Activated T-helper 1 cell treated with anti-CD3 and anti-CD28 coated beads, Interleukin-12 subunit alpha, Interleukin-12 subunit beta, Interleukin-2, Interleukin-4 antibody, amounts not matched to agents 30 ng/mL and 10 ng/mL and 1 ng/mL, durations not matched to agents 14 hours and 24 hours and 36 hours (primary cell): ENCODE measurements at regions of chr9 and their contacts with region 1.

Region 1: DNA sequence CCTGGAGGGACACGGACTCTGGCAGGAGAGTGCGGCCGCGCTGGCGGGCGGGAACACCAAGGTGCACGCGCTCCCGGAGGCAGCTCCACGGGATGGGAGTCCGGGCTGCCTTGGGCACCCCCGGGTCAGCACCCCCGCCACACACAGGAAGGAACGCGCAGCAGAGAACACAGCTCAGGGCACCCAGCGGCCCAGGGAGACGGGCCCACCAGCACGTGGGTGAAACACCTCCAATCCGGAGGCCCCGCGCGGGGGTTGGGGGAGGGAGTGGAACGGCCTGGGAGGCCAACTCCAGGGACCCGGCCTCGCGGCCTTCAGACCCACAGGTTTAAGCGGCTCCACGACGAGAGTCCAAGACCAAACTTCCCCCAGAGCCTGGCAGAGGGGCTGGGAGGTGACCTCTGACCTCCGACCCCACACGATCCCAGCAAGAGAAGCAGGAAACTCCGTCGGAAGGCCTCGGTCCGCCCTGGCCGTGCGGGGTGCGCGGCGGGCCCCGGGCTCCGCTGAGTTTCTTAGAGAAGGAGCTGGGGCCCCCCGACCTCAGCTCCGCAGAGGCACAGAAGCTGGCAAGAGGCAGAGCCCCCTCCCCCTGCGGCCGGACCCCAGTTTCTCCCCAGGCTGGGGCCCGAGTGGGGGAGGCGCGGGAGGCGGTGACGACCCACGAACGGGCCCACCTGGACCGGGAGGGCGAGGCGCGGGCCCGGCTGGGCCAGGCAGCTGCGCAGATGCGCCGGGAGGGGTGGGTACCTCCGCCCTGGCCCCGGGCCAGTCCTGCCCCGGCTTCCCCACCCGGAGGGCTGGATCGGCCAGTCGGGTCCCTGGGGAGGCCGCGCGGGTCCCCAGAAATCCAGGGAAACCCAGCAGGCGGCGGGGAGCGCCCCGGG is 851 bp downstream of the NACC2 start:
- DNase-seq: no peak
- H3K4me3 Mint-ChIP-seq: peak overlapping the region; percentile 75
- H3K27ac Mint-ChIP-seq: no peak overlapping the region
- H3K4me1 Mint-ChIP-seq: no peaks in the 10 kb centered on the region
- H3K27me3 Mint-ChIP-seq: peaks cover 8% of the 10 kb centered on the region

Region 2: DNA sequence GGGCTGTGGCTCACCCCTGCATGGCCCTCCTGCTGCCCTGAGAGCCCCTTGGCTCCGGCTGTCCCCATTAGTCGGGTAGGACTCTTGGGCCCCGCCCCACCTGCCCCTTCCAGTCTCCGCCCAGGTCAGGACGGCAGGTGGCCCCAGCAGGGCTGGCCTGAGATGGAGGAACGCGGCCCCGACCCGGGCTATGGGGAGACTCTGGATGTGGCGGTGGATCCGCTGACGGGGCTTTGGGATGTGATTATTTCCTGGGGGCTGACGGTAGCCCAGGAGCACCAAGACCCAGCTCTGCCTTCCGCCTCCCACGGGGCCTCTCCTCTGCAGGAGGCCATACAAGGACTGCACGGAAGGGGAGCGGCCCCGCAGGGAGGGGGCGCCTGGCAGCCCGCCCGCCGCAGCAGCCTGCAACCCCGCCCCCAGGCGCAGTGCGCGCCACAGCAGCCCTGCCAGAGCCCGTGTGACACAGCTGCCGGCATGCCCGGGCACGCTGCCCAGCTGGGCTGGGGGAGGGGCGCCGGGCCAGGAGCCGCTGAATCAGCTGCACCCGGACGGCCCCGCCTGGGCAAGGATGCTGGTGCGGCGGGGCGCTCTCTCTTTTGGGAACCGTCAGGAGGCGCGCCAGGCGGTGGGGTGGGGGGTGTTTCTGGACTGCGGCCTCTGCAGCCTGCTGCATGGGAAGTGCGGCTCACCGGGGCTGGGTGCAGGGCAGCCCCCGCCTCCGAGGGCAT is 15.3 kb after region 1 on chr9:
- intact Hi-C with region 1: loop called (anchors 2 kb)
- DNase-seq: peak; percentile 90
- H3K4me3 Mint-ChIP-seq: peak overlapping the region; percentile 85
- H3K27ac Mint-ChIP-seq: peak overlapping the region; percentile 84
- H3K4me1 Mint-ChIP-seq: peaks cover 39% of the 10 kb centered on the region
- H3K27me3 Mint-ChIP-seq: peaks cover 3% of the 10 kb centered on the region

Region 3: DNA sequence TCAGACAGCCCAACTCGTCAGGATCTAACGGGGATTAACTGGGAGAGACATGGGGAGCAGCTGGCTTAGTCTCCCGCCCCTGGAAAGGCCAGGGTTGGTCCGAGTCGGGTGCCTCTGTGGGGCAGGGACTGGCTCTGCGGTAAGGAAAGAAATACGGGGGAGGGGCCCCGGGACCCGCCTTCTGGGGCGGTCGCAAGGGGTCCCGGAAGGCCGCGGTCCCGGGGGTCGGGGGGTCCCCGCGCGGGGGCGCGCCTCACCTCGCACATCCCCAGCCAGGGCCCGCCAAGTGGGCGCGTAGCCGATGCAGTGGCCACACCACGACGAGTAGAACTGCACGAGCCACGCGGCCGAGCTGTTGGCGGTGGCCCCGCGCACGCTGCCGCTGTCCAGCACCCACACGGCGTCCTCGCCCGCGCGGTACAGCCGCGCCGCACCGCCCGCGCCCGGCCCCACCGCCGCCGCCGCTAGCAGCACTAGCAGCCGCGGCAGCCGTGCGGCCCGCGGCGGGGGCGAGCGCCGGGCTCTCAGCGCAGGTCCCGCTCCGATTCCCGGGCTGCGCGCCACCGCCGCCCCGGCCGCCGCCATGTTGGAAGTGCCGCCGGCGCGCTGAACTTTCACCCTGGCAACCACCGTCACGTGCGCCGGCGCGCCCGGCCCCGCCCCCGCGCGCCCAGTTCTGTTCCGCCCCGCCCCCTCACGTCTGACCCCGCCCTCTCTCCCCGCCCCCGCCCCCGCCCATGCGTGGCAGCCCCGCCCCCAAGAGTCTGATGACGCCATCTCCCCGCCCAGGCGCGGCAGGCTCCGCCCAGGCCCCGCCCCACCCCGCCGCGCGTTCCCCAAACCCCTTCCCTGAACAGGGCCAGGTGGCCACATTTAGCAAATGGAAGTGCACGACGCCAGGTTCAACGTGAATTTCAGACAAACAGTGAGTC is 151.2 kb after region 1 on chr9 and contains the start of gene QSOX2:
- intact Hi-C with region 1: no loop called
- DNase-seq: peak; percentile 77
- H3K4me3 Mint-ChIP-seq: peak within 1 kb of the TSS; percentile 96
- H3K27ac Mint-ChIP-seq: peak within 1 kb of the TSS; percentile 96
- H3K4me1 Mint-ChIP-seq: peaks cover 24% of the 10 kb centered on the region
- H3K27me3 Mint-ChIP-seq: no peaks in the 10 kb centered on the region
- total RNA-seq, gene QSOX2: 27.9 and 28.6 TPM in 2 replicates